ENCODE measurements at regions of chr2 and their contacts with region 1.

Region 1: DNA sequence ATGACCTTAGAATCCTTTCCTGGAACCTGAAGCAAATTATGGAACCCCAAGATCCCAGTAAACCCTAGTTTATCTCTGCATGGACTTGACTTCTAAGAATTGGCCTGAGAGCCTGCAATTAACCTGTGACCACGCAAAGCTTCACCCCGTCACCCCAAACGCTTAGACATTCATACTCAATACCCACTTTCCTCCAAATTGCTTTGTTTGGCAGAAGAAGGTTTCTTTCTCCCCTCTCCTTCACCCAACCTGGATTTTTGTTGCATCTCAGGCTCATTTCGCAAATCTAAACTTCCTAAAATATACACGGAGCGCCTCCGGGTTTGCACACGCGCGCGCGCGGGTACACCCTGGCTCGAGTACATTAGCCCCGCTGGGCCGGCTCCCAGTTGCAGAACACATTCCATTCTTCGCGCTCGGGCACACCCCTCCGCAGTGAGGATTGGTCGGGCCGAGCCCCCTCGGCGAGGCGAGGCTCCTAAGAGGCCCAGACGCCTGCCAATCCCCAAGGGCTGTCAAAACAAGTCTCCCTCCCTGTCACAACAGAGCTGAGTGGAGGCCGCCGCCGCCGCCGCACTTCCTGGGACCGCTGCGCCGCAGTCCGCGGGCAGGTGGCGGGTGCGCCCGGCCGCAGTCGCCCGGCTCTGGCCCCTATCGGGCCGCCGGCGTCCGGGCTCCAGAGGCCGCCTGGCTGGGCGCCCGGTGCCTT is at the start of gene PLCL1:
- DNase-seq: peak; percentile 94
- H3K4me3 ChIP-seq: peak within 1 kb of the TSS; percentile 59 to 89 (median 72)
- H3K27ac ChIP-seq: peak within 1 kb of the TSS; percentile 8 to 87 (median 68)
- H3K4me1 ChIP-seq: peaks cover 18 to 46% (median 28%) of the 10 kb centered on the region in 6 donors
- H3K27me3 ChIP-seq: peaks cover 0 to 71% (median 44%) of the 10 kb centered on the region in 7 donors
- CTCF ChIP-seq: peak in 3 of 11 experiments; percentile 12 to 22 (median 15)
- POLR2A ChIP-seq: no peak
- total RNA-seq, gene PLCL1: 3.1 to 6.5 (median 4.4) TPM

Region 2: DNA sequence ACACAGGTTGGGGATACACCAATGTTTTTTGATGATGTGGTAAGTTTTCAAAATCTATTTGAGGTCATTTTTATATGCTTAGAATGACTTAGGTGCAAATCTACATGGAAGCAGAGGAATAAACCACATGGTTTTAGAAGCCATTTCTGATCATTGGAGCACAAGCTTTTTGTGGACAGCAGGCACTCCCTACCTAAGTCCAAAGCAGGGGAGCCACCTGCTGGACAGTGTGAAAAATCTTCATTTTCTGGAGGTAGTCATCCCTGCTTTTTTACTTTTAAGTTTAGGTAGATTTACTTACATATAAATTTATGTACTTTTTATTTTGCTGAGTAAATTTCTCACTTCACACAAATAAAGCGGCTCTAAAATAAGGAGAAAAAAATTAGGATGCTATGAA is 323.4 kb after region 1 on chr2:
- intact Hi-C with region 1: loop called (anchors 5 kb)
- DNase-seq: no peak
- H3K4me3 ChIP-seq: no peak overlapping the region
- H3K27ac ChIP-seq: no peak overlapping the region
- H3K4me1 ChIP-seq: no peaks in the 10 kb centered on the region
- H3K27me3 ChIP-seq: no peaks in the 10 kb centered on the region
- CTCF ChIP-seq: peak in 9 of 11 experiments; percentile 13 to 58 (median 44)
- POLR2A ChIP-seq: no peak

Region 3: DNA sequence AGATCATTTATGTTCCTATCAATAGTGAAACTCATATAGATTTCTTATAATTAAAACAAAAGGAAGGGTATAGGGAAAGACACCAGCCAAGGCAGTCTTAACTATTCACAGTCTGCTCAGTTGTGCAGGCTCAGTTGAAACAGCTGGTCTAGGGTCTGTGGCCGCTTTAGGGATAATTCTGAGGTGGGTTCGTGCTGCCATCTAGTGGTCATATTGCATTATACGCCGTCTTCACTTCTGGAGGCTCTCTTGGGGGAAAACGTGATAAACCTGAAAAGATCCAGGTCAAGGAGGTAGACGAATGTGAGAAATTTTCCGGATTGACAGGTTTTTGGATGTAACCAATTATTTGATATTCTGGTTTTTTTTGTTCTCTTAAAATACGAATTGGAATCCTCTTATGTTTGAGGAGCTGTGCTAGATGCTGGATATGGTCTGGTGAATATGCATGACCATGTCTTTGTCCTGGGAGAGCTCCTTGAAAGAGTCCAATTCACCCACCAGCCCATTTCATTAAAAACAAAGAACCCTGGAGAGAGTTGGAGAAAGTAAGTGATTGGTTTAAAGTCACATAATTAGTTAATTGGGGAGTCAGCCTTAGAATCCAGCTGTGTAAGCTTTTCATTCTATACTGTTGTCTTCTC is 492.6 kb after region 1 on chr2:
- intact Hi-C with region 1: loop called (anchors 5 kb)
- DNase-seq: no peak
- H3K4me3 ChIP-seq: no peak overlapping the region
- H3K27ac ChIP-seq: no peak overlapping the region
- H3K4me1 ChIP-seq: peaks cover 0 to 9% (median 3%) of the 10 kb centered on the region in 6 donors
- H3K27me3 ChIP-seq: peaks cover 0 to 16% (median 0%) of the 10 kb centered on the region in 7 donors
- CTCF ChIP-seq: peak; percentile 33 to 85 (median 72)
- POLR2A ChIP-seq: no peak

Region 4: DNA sequence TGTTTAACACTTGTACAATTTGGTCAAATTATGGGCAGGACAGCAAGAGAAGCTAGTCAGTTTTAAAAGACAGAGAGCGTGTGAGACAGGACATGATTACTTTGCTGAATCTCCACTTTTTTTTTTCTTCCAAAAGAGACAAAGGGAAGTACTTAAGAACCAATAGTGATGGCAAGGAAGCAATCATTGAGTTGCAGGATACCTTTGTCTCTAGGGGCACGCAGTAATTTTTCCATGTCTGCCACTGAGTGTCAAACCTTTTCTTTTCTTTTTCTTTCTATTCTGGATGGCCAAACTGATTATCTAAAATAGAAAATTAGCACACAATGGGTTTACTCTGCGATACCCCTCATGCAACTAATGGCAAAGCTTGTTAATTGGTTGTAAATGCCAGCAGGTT is 533.2 kb after region 1 on chr2:
- intact Hi-C with region 1: no loop called
- DNase-seq: no peak
- H3K4me3 ChIP-seq: no peak overlapping the region
- H3K27ac ChIP-seq: no peak overlapping the region
- H3K4me1 ChIP-seq: no peaks in the 10 kb centered on the region
- H3K27me3 ChIP-seq: peaks cover 0 to 30% (median 0%) of the 10 kb centered on the region in 7 donors
- CTCF ChIP-seq: no peak
- POLR2A ChIP-seq: no peak

Measured in spleen (tissue), 13 donors.